ENCODE measurements at regions of chr15 and their contacts with region 1.

Region 1: DNA sequence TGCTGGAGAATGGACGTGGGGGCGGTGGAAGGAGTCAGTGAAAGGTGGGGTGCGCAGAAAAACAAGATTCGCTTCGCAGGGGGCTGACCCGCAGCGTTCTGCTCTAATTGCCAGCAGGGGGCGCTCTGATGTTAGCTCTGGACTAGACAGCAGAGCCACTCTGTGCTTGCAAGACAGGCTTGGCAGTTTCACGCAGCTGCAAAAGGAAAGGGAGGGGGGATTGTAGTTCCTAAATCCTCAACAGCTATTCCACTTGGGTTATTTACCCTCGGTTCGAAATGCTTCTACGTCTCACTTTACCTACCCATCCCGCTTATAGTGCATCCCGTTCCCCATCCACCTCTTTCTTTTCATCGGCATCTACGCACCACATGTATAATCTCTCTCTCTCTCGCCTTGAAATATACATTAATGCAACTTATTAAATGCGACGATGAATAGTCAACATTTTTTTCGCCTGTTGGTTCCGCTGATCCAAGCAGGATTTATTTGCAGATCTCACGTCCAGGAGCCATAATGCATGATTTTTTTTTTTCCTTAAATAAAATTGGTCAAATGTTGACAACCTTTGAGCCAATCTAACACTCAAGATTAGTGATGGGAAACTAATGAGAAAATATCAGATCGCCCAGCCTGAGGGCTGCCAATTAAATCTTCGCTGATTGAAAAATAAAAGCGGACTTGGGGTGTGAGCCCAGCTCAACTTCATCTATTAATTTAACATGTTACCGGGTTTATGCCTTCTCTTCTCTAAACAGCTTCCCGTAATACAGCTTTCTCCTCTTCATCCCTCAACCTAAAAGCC is 216.4 kb downstream of the MEIS2 start:
- DNase-seq: peak; percentile 83
- H3K4me3 Mint-ChIP-seq: peak overlapping the region; percentile 23
- H3K27ac Mint-ChIP-seq: no peak overlapping the region
- H3K4me1 Mint-ChIP-seq: peaks cover 10% of the 10 kb centered on the region
- H3K27me3 Mint-ChIP-seq: peaks cover 65% of the 10 kb centered on the region
- CTCF ChIP-seq: peak; percentile 85

Region 2: GRCh38 chr15:35519541-35520149 is 1364.3 kb before region 1 on chr15:
- CTCF ChIA-PET with region 1: no interaction called
- POLR2A ChIA-PET with region 1: no interaction called
- intact Hi-C with region 1: loop called (anchors 10 kb)
- DNase-seq: peak; percentile 64
- H3K4me3 Mint-ChIP-seq: no peak overlapping the region
- H3K27ac Mint-ChIP-seq: no peak overlapping the region
- H3K4me1 Mint-ChIP-seq: peaks cover 6% of the 10 kb centered on the region
- H3K27me3 Mint-ChIP-seq: no peaks in the 10 kb centered on the region
- CTCF ChIP-seq: peak; percentile 53

Region 3: DNA sequence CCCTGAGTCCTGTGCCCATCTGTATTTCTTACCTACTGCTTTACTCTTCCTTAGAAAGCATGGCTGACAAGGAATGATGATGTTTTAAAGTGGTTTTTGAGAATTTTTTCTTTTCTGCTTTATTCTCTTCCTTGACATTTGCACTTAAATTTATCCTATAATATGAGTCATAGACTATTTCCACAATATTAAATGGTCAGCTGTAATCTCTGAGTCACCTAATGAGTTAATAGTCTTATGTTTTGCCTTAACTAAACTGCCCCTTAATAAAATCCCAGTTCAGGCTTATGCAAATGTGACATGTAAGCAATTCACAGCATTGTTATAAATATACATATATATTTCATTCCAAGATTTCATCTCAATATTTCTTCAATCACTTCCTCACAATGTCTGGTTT is 192.6 kb after region 1 on chr15:
- CTCF ChIA-PET with region 1: no interaction called
- POLR2A ChIA-PET with region 1: no interaction called
- intact Hi-C with region 1: no loop called
- DNase-seq: no peak
- H3K4me3 Mint-ChIP-seq: no peak overlapping the region
- H3K27ac Mint-ChIP-seq: no peak overlapping the region
- H3K4me1 Mint-ChIP-seq: peaks cover 5% of the 10 kb centered on the region
- H3K27me3 Mint-ChIP-seq: no peaks in the 10 kb centered on the region
- CTCF ChIP-seq: no peak

Region 4: GRCh38 chr15:37122703-37123102 is 238.8 kb after region 1 on chr15:
- CTCF ChIA-PET with region 1: interaction called, 18 read pairs
- POLR2A ChIA-PET with region 1: no interaction called
- intact Hi-C with region 1: no loop called
- DNase-seq: peak; percentile 14
- H3K4me3 Mint-ChIP-seq: no peak overlapping the region
- H3K27ac Mint-ChIP-seq: no peak overlapping the region
- H3K4me1 Mint-ChIP-seq: no peaks in the 10 kb centered on the region
- H3K27me3 Mint-ChIP-seq: peaks cover 12% of the 10 kb centered on the region
- CTCF ChIP-seq: no peak